ENCODE measurements at regions of chr12 and their contacts with region 1.

Region 1: GRCh38 chr12:90102957-90103652 is 394.5 kb upstream of the ATP2B1 start:
- DNase-seq: no peak
- H3K4me3 ChIP-seq: no peak overlapping the region
- H3K27ac ChIP-seq: no peak overlapping the region
- H3K4me1 ChIP-seq: peaks cover 0 to 7% (median 0%) of the 10 kb centered on the region in 3 donors
- H3K27me3 ChIP-seq: no peaks in the 10 kb centered on the region
- CTCF ChIP-seq: peak in 4 of 6 experiments; percentile 25 to 61 (median 40)
- POLR2A ChIP-seq: no peak

Region 2: DNA sequence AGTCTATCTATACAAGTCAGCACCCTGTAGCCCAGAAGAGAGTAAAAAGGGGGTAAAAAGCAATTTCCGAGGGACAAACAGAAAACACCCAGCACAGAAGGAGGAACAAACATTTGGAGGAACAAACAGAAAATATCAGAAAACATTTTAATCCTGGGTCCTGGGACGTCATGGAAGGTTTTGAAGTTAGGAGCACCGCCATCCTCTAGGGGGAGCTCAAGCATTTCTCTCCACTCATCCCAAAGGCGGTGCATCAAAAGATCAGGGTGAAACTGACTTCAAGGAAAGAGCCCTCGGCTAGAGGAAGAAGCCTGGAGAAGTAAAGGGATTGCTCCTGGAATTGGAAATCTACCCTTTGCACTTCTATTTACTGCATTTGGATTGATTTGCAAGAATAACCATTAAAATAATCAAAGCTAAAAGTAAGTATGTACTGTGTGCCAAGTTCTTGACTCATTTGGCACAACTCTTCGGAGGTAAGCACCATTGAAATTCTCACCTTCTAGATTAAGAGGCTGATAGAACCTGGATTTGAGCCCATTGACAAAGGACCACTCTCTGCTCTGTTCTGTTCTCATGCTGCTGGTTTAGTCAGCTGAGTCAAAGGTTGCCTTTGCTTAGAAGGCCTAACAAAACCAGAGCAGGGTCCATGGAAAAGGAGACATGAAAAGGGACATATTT is 560.1 kb before region 1 on chr12:
- intact Hi-C with region 1: loop called (anchors 10 kb)
- DNase-seq: no peak
- H3K4me3 ChIP-seq: no peak overlapping the region
- H3K27ac ChIP-seq: no peak overlapping the region
- H3K4me1 ChIP-seq: peaks cover 0 to 22% (median 8%) of the 10 kb centered on the region in 3 donors
- H3K27me3 ChIP-seq: no peaks in the 10 kb centered on the region
- CTCF ChIP-seq: peak; percentile 56 to 92 (median 81)
- POLR2A ChIP-seq: no peak

Region 3: GRCh38 chr12:89768586-89769486 is 334.3 kb before region 1 on chr12:
- intact Hi-C with region 1: no loop called
- DNase-seq: no peak
- H3K4me3 ChIP-seq: no peak overlapping the region
- H3K27ac ChIP-seq: no peak overlapping the region
- H3K4me1 ChIP-seq: no peaks in the 10 kb centered on the region
- H3K27me3 ChIP-seq: no peaks in the 10 kb centered on the region
- CTCF ChIP-seq: no peak
- POLR2A ChIP-seq: no peak

Measured in esophagus squamous epithelium (tissue), 5 donors.